Activated CD4-positive, alpha-beta T cell treated with anti-CD3 and anti-CD28 coated beads for 36 hours (primary cell): ENCODE measurements at regions of chr14 and their contacts with region 1.

Region 1: DNA sequence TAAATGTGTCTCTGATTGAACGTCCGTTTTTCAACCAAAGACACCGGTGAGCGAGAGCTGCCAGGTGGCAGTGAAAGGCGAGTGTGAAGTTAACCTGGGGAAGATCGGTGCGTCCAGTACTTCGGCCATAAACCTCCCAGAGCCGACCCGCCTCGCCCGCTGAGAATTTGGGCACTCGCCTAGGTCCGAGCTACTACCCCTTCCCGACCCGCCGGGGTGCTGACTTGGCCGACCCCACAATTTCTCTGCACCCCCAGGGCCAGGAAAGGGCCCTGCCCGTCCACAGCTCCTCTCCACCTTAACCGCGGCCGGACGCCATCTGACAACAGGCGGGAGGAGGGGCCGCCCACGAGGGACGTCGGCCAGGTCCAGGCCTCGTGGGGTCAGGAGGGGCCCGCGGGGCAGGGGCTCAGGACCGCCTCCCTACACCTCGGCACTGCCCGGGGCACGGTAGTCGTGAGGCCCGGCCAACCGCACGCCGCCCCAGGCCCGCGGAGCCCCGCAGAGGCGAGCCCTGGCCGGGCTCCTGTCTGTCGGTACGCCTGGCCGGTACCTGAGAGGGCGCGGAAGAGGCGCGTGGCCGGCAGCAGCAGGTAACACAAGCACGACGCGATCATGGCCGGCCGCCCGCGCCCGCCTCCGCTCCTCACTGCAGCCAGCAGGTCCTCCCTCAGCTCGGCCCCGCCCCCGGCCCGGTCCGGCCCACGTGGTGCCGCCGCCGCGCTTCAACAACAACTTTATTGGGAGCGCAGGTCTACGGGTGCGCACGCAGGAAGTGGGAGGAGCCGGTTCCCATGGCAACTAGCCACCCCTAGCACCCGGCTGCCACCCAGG is at the start of gene ANGEL1:
- DNase-seq: peak; percentile 98
- ATAC-seq: peak; percentile 90
- H3K4me3 Mint-ChIP-seq: peak within 1 kb of the TSS; percentile 97
- H3K27ac Mint-ChIP-seq: peak within 1 kb of the TSS; percentile 93
- H3K4me1 Mint-ChIP-seq: peaks cover 27% of the 10 kb centered on the region
- H3K27me3 Mint-ChIP-seq: no peaks in the 10 kb centered on the region
- total RNA-seq, gene ANGEL1: 15.8 to 17.2 TPM

Region 2: DNA sequence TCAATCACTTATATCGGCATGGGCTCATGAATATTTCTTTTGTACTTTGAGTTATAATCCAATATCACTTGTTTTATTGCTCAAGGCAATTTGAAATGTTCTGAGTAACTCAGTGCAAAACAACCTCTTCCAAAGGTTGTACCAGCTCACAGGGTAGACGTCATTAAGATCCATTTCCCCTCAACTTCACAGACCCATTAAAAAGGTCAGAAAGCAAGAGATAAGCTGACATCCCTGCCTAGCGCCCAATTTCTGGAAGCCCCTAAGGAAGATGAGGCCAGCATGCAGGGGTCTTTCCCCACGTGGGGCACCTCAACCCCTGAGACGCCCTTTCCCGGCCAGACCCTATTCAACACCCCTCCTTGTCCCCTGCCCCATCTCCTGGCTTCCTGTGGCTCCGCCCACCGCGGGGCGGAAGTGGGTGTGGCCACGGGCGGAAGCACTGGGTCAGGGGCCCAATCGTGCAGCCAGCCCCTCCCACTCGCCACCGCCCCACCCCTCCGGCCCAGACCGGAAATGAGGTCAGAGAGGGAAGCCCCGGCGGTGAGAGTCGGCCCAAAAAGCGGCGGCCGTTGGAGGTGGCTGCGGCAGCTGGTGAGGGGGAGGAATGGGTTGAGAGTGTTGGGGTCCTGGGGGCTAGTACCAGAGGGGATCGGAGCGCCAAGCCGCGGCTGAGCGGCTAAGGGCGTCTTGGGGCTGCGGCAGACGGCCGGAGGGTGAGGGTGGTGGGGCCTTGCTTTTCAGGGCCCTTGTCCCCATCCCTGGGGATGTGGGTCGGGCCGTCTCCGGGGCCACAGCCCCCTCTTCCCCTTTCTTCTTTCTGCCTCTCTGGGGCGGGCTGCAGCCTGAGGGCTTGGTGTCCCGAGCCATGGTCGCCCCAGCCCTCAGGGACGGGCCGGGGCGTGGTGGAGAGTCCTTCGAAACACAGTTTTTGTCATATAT is 660.8 kb before region 1 on chr14 and contains the start of gene GPATCH2L:
- CTCF ChIA-PET with region 1: no interaction called
- POLR2A ChIA-PET with region 1: no interaction called
- intact Hi-C with region 1: loop called in 1 of 2 experiments (anchors 1 kb)
- DNase-seq: peak; percentile 98
- ATAC-seq: peak; percentile 92
- H3K4me3 Mint-ChIP-seq: peak within 1 kb of the TSS; percentile 92
- H3K27ac Mint-ChIP-seq: peak within 1 kb of the TSS; percentile 95
- H3K4me1 Mint-ChIP-seq: peaks cover 46% of the 10 kb centered on the region
- H3K27me3 Mint-ChIP-seq: no peaks in the 10 kb centered on the region
- total RNA-seq, gene GPATCH2L: 43.0 to 47.2 TPM

Region 3: DNA sequence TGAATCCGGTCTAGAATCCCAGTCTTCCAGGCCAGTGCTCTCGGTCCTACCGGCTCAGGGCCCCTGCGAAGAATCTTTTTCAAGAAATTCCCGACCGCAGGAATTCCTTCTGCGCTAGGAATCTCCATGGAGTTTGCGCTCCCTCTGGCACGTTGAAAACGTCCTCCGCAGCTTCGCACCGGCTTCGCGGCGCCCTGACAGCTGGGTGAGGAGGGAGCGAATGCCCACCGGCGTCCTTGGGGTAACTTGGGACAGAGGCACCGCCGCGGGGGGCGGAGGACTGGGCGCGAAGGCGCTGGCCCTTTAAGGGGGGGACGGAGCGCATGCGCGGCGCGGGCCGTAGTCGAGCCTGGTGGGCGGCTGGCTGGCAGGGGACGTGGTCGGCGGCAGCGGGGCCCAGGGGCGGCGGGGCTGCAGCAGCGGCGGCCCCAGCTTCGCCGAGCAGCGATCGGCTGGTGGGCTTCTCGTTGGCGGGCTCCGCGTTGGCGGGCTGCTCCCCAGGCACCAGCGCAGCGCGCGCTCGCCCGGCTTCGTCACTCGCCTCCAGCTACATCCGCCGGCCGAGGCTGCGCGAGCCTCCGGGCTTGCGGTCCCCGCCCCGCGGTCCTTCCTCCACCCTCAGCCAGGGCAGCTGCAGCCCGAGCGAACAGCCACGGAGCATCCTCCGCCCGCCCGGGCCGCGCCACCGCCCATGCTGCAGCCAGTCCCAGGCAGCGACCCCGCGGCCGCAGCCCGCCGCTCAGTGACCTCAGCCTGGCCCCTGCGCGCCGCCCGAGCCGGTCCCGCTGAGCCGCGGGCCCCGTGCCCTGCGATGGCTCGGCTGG is 51.1 kb before region 1 on chr14 and contains the start of gene VASH1:
- CTCF ChIA-PET with region 1: interaction called, 4 read pairs
- POLR2A ChIA-PET with region 1: interaction called, 4 read pairs
- intact Hi-C with region 1: loop called in 1 of 2 experiments (anchors 1 kb)
- DNase-seq: peak; percentile 78
- ATAC-seq: peak; percentile 89
- H3K4me3 Mint-ChIP-seq: peak within 1 kb of the TSS; percentile 73
- H3K27ac Mint-ChIP-seq: peak within 1 kb of the TSS; percentile 11
- H3K4me1 Mint-ChIP-seq: peaks cover 8% of the 10 kb centered on the region
- H3K27me3 Mint-ChIP-seq: peaks cover 27% of the 10 kb centered on the region
- total RNA-seq, gene VASH1: 4.0 to 5.3 TPM

Region 4: GRCh38 chr14:76784266-76785264 is 27.9 kb before region 1 on chr14:
- CTCF ChIA-PET with region 1: interaction called, 12 read pairs
- POLR2A ChIA-PET with region 1: no interaction called
- intact Hi-C with region 1: no loop called
- DNase-seq: peak; percentile 81
- ATAC-seq: peak; percentile 85
- H3K4me3 Mint-ChIP-seq: no peak overlapping the region
- H3K27ac Mint-ChIP-seq: no peak overlapping the region
- H3K4me1 Mint-ChIP-seq: peaks cover 32% of the 10 kb centered on the region
- H3K27me3 Mint-ChIP-seq: no peaks in the 10 kb centered on the region

Region 5: GRCh38 chr14:77033622-77034521 is 221.4 kb after region 1 on chr14:
- CTCF ChIA-PET with region 1: interaction called, 3 read pairs
- POLR2A ChIA-PET with region 1: no interaction called
- intact Hi-C with region 1: loop called in 1 of 2 experiments (anchors 2 kb)
- DNase-seq: peak; percentile 94
- ATAC-seq: peak; percentile 77
- H3K4me3 Mint-ChIP-seq: peak overlapping the region; percentile 89
- H3K27ac Mint-ChIP-seq: peak overlapping the region; percentile 97
- H3K4me1 Mint-ChIP-seq: peaks cover 76% of the 10 kb centered on the region
- H3K27me3 Mint-ChIP-seq: no peaks in the 10 kb centered on the region